GM13976 (cell line): ENCODE measurements at regions of chr2 and their contacts with region 1.

Region 1: DNA sequence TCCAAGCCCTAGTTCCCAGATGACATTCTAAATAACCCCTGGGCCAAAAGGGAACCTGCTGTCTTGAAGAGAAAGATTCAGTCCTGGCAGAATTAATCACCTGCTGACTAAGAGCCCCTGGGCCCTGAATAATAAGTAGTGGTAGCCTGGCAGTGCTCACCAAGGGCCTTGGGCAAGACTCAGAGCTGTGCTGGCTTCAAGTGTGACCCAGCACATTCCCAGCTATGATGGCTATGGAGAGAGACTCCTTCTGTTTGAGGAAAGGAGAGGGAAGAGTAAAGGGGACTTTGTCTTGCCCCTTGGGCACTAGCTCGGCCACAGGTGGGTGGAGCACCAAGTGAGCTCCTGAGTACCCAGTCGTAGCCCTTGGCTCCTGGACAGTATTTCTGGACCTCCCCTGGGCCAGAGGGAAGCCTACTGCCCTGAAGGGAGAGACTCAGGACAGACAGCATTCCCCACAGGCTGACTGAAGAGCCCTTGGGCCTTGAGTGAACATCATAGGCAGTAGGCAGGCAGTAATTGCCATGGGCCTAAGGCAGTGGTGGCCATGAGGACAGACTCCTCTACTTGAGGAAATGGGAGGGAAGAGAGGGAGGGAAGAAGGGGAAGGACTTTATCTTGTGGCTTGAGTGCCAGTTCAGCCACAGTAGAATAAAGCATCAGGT is 40.0 kb upstream of the INPP4A start:
- DNase-seq: no peak
- CTCF ChIP-seq: no peak

Region 2: DNA sequence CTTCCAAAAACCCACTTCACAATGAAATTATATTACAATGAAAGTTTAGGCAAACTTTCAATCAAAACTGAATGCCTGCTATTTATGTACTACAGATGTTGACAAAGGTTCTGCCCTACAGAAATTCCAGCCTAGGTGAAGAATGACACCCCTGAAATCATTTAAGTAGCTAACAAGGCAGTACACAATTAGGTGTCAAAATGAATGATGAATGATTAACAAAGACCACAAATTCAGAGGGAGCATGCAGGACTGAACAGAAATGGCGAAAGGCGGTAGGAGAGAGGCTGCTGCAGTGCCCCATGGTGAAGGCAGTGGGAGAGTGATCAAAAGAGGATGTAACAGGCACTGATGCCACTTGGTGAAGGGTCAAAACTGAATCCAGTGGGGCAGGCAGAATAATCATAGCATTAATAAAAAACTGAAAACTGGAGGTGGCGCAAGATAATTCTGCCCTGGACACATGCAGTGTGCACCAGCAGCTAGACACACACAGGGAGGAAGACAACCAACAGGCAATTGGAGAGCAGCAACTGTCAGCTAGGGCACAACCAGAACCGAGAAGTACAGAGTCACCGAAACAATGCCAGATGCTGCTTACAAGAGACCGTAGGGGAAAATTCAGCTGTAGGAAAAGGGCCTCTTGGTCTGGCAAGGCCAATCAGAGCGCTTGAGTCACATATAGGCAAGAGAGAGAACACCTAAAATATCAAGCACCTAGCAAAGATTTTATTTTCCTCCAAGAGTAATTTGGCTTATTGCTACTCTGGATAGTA is 413.4 kb before region 1 on chr2:
- in situ Hi-C with region 1: no loop called
- DNase-seq: no peak
- CTCF ChIP-seq: no peak

Region 3: DNA sequence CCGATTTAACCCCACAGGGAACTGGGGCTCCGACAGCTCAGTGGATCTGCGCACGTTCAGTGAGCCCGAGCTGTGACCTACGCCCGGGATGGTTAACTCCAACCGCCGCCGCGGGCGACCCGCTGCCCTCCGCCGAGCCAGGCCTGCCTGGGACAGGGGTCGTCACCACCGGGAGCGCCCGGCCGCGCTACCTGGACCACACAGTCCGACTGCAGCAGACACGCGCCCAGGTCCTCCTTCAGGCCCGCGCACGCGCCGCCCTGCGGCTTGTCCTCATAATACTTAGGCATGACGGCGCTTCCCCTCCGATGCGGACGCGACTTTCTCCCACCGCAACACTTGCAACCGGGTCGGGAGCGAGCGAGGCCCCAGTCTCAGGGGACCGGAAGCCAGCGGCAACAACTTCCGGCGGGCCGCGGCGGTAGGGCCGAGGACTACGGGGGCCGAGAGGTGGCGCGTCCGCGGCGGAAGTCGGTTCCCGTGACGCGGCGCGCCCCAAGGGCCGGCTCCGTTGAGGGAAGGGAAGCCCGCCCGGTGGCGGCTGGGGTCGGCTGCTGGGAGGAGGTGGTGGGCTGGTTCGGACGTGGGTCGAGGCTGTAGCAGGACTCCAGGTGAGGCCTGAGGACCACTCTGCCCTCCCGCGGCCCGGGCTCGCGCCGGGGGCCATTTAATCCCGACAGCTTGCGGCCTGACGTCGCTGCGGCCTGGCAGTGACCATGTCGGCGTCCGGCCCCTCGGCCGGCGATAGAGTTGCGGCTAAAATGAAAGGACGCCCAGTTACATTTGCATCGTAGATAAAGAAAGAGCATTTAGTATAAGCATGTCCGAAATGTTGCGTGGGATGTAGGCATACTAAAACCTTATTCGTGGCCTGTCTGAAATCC is 203.7 kb after region 1 on chr2 and contains the starts of genes COA5 and UNC50:
- in situ Hi-C with region 1: loop called (anchors 10 kb)
- DNase-seq: peak; percentile 98
- CTCF ChIP-seq: peak; percentile 22